ENCODE measurements at regions of chr15 and their contacts with region 1.

Region 1: GRCh38 chr15:42736793-42737528 is at the start of gene CDAN1:
- DNase-seq: no peak
- H3K4me3 ChIP-seq: peak within 1 kb of the TSS; percentile 92
- CTCF ChIP-seq: no peak

Region 2: DNA sequence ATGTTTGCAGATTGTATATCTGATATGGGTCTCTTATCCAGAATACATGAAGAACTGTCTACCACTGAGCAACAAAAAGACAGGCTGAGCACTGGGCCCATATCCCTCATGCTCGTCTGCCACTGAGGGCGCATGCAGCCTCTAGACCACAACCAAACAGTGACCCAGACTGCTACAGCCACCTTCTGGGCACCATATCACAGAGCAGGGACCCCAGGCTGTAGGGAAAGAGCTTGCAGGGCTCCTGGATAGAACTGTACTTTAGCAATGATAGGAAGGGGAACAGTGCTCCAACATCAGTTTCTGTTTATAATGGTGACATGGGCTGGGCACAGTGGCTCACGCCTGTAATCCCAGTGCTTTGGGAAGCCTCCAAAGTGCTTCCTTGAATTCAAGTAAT is 423.5 kb before region 1 on chr15:
- CTCF ChIA-PET with region 1: no interaction called
- POLR2A ChIA-PET with region 1: no interaction called
- DNase-seq: no peak
- H3K4me3 ChIP-seq: no peak overlapping the region
- CTCF ChIP-seq: no peak

Region 3: DNA sequence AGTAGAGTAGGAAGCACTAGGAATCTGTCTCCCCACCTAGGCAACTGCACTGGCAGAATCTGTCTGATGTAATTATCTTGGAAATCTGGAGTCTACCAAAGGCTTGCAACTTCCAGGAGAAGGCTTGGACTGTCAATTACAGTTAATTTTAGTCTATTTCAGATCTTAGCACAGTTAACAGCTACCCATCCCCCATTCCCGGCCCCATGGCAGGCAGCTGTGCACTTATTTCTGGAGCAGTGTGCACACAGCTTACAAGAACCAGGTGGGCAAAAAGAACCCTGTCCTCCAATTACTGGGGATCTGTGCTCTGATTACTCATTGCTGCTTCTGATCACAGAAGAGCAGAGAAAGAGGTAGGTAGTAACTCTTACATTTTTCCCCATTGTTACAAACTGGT is 12.3 kb after region 1 on chr15:
- CTCF ChIA-PET with region 1: interaction called, 10 read pairs
- POLR2A ChIA-PET with region 1: no interaction called
- DNase-seq: no peak
- H3K4me3 ChIP-seq: no peak overlapping the region
- CTCF ChIP-seq: no peak

Measured in AG04449 (cell line).